HEK293 (cell line): ENCODE measurements at regions of chr1 and their contacts with region 1.

Region 1: GRCh38 chr1:61453111-61453961 is 271.6 kb downstream of the TM2D1 start:
- H3K4me3 ChIP-seq: no peak overlapping the region
- H3K27ac ChIP-seq: peak overlapping the region; percentile 61
- H3K4me1 ChIP-seq: peaks cover 35% of the 10 kb centered on the region
- CTCF ChIP-seq: peak; percentile 78; the same call in 1 of the 2 replicates

Region 2: DNA sequence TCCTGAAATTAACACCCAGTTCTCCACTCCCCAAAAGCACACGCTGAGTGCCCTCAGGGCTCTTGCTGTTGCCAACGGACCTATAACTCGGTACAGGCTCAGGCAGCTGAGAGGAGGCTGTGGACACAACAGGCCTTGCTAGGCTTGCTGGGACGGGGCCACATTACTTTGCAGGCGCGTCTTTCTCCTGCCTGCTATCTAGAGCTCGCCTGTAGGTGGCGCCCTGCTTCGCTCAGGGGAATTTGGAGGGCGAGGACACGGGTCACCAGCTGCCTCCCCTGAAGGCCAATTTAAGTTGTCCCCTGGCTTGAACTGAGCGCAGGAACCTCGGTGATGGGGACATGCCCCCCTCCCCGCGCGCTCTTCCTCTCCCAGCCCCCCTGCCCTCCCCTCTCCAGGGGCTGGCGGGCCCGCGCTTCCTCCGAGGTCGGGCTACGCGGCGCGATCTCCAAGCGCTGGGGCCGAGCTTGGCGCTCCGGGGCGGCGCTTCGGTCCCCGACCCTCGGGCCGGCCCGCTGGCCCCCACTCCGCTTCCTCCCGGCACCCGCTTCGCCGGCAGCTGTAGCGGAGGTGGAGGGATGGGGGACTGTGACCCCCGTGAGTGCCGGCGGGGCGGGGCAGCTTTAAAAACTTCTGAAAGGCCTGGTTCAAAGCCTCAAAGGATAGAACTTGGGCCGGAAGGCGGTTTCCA is 403.3 kb before region 1 on chr1:
- CTCF ChIA-PET with region 1: interaction called, 10 read pairs
- POLR2A ChIA-PET with region 1: no interaction called
- H3K4me3 ChIP-seq: peak overlapping the region; percentile 74
- H3K27ac ChIP-seq: peak overlapping the region; percentile 95
- H3K4me1 ChIP-seq: no peaks in the 10 kb centered on the region
- CTCF ChIP-seq: peak; percentile 96

Region 3: GRCh38 chr1:61202854-61203598 is 250.3 kb before region 1 on chr1:
- CTCF ChIA-PET with region 1: no interaction called
- POLR2A ChIA-PET with region 1: no interaction called
- H3K4me3 ChIP-seq: no peak overlapping the region
- H3K27ac ChIP-seq: no peak overlapping the region
- H3K4me1 ChIP-seq: peaks cover 8% of the 10 kb centered on the region; the same call in 1 of the 2 replicates
- CTCF ChIP-seq: no peak

Region 4: DNA sequence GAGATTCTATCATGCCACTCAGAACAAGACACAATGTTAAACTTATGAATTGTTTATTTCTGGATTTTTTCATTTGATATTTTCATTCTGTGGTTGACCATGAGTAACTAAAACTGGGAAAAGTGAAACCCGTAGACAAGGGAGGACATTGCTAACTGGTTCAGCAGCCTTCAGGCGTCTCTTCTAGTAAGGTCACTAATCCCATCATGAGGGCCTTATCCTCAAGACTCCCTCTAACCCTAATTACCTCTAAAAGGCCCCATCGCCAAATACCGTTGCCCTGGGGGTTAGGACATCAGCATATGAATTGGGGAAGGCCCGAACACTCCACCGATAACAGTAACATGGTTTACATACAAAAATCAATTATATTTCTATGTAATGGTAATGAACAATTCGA is 24.0 kb after region 1 on chr1:
- CTCF ChIA-PET with region 1: no interaction called
- POLR2A ChIA-PET with region 1: no interaction called
- H3K4me3 ChIP-seq: no peak overlapping the region
- H3K27ac ChIP-seq: no peak overlapping the region
- H3K4me1 ChIP-seq: no peaks in the 10 kb centered on the region
- CTCF ChIP-seq: no peak